ENCODE measurements at regions of chr1 and their contacts with region 1.

Region 1: DNA sequence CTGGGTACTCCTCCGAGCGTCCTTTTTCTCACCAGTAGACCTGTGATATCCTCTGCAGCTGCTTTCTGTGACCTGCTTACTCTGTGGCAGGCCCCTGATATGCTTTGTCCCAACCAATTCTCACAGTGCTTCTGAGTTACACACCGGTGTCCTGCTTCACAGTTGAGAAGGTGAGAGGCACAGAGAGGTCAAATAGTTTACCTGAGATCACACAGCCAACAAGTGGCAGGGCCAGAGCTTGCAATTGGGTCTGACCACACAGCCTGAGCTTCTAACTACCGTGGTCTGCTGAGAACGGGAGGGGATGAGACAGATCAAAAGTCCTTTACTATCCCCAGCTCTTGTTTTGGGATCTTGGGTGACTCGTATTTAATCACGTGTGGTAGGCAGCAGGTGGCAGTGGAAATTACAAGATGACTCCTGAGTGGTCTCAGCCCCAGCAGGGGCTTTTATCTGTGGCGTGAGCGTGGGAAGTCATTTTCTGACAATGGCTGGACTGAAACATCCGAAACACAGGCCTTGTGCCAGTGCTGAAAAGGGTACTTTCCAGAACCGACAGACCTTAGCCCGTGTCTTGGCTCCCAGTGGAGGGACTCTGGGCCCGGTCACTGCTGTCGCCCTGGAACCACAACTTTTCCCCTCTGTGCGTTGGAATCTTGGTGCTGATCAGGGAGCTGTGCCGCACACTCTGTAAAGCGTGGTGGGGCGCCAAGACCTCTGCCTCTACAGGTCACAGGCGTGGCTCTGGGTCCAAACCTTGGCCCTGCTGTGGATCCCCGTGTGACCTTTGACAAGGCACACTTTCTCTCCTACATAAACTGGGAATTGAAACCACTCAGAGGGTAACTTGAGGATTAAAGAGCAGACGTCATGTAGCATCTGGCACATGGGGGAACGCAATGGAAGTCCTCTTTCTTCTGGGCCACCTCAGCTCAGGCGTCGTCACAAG is 11.9 kb downstream of the THEMIS2 start:
- DNase-seq: peak; percentile 87
- ATAC-seq: peak; percentile 65
- H3K4me3 ChIP-seq: no peak overlapping the region; the same call in 1 of the 2 replicates
- H3K27ac ChIP-seq: peak overlapping the region; percentile 94
- H3K4me1 ChIP-seq: peaks cover 63% of the 10 kb centered on the region
- H3K27me3 ChIP-seq: no peaks in the 10 kb centered on the region
- CTCF ChIP-seq: no peak; a peak in 1 of 6 replicates
- EP300 ChIP-seq: peak; percentile 60 to 85; a peak in 3 of 4 replicates
- POLR2A ChIP-seq: peak; percentile 60
- RAD21 ChIP-seq: no peak

Region 2: GRCh38 chr1:27643701-27644625 is 240.3 kb before region 1 on chr1:
- CTCF ChIA-PET with region 1: no interaction called
- POLR2A ChIA-PET with region 1: no interaction called
- RAD21 ChIA-PET with region 1: no interaction called
- SMC1A ChIA-PET with region 1: no interaction called
- in situ Hi-C with region 1: no loop called
- intact Hi-C with region 1: no loop called
- DNase-seq: no peak
- ATAC-seq: peak; percentile 99
- H3K4me3 ChIP-seq: no peak overlapping the region
- H3K27ac ChIP-seq: no peak overlapping the region
- H3K4me1 ChIP-seq: peaks cover 8% of the 10 kb centered on the region
- H3K27me3 ChIP-seq: no peaks in the 10 kb centered on the region
- CTCF ChIP-seq: peak; percentile 80 to 98 (median 94)
- EP300 ChIP-seq: no peak
- POLR2A ChIP-seq: no peak
- RAD21 ChIP-seq: peak; percentile 81

Region 3: GRCh38 chr1:27816921-27817630 is 67.2 kb before region 1 on chr1:
- CTCF ChIA-PET with region 1: no interaction called
- POLR2A ChIA-PET with region 1: no interaction called
- RAD21 ChIA-PET with region 1: no interaction called
- SMC1A ChIA-PET with region 1: no interaction called
- in situ Hi-C with region 1: no loop called
- intact Hi-C with region 1: no loop called
- DNase-seq: no peak
- ATAC-seq: no peak
- H3K4me3 ChIP-seq: no peak overlapping the region
- H3K27ac ChIP-seq: no peak overlapping the region
- H3K4me1 ChIP-seq: no peaks in the 10 kb centered on the region
- H3K27me3 ChIP-seq: no peaks in the 10 kb centered on the region
- CTCF ChIP-seq: no peak
- EP300 ChIP-seq: no peak
- POLR2A ChIP-seq: no peak
- RAD21 ChIP-seq: no peak

Region 4: DNA sequence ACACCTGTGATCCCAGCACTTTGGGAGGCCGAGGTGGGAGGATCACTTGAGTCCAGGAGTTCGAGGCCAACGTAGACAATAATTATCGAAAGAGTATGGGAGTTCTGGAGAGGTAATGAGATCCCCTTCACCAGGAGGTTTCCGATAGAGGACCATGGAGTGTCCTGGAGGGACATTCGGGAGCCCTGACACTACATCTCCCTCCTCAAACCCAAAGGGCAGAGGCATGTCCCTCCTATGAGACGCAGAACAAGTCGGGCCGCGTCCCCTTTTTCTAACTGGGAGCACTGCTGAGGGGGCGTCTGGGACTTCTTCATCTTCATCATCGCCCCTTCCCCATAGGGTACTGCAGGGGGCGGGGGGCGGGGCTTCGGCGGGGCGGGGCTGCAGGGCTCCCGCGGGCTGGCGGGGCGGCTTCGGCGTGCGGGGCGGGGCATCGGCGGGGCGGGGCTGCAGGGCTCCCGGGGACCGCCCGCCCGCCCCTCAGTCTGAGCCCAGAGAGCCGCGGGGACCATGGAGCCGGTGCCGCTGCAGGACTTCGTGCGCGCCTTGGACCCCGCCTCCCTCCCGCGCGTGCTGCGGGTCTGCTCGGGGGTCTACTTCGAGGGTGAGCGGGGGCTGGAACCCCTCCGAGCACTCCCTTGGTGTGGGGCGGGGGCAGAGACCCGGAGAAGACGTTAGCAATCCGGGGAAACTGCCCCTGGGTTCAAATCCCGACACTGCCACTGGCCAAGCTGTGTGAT is 12.1 kb before region 1 on chr1 and contains the start of gene THEMIS2:
- CTCF ChIA-PET with region 1: interaction called, 16 read pairs
- POLR2A ChIA-PET with region 1: interaction called, 63 read pairs
- RAD21 ChIA-PET with region 1: interaction called, 33 read pairs
- SMC1A ChIA-PET with region 1: interaction called, 30 read pairs
- in situ Hi-C with region 1: no loop called
- intact Hi-C with region 1: loop called (anchors 1 kb)
- DNase-seq: no peak
- ATAC-seq: peak; percentile 66
- H3K4me3 ChIP-seq: peak within 1 kb of the TSS; percentile 90
- H3K27ac ChIP-seq: peak within 1 kb of the TSS; percentile 93
- H3K4me1 ChIP-seq: peaks cover 44% of the 10 kb centered on the region
- H3K27me3 ChIP-seq: no peaks in the 10 kb centered on the region
- CTCF ChIP-seq: no peak
- EP300 ChIP-seq: no peak
- POLR2A ChIP-seq: peak; percentile 88
- RAD21 ChIP-seq: no peak
- polyA plus RNA-seq, gene THEMIS2: 9.1 to 12.9 TPM

Region 5: DNA sequence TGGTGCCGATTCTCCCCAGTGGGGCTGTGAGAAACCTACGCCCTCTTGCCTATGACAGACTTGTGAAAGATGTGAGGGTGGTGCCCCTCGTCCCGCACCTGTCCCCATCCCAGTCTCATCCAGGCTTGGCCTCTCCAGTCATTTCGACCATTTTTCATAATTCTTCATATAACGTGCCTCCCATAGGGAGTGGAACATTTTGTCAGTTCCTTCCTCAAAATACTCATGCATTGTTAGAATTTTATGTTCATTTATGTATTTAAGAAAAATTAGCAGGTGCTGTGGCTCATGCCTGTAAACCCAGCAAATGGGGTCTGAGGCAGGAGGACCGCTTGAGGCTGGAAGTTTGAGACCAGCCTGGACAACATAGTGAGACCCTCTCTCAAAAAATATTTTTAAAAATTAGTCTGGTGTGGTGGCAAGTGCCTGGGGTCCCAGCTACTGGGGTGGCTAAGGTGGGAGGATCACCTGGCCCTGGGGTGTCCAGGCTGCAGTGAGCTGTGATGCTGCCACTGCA is 30.9 kb after region 1 on chr1:
- CTCF ChIA-PET with region 1: no interaction called
- POLR2A ChIA-PET with region 1: no interaction called
- RAD21 ChIA-PET with region 1: no interaction called
- SMC1A ChIA-PET with region 1: interaction called, 11 read pairs
- in situ Hi-C with region 1: no loop called
- intact Hi-C with region 1: no loop called
- DNase-seq: no peak
- ATAC-seq: no peak
- H3K4me3 ChIP-seq: no peak overlapping the region
- H3K27ac ChIP-seq: peak overlapping the region; percentile 85; the same call in 1 of the 2 replicates
- H3K4me1 ChIP-seq: no peaks in the 10 kb centered on the region; the same call in 1 of the 2 replicates
- H3K27me3 ChIP-seq: no peaks in the 10 kb centered on the region
- CTCF ChIP-seq: no peak
- EP300 ChIP-seq: no peak
- POLR2A ChIP-seq: no peak
- RAD21 ChIP-seq: no peak